HepG2 (cell line): ENCODE measurements at regions of chr2 and their contacts with region 1.

Region 1: DNA sequence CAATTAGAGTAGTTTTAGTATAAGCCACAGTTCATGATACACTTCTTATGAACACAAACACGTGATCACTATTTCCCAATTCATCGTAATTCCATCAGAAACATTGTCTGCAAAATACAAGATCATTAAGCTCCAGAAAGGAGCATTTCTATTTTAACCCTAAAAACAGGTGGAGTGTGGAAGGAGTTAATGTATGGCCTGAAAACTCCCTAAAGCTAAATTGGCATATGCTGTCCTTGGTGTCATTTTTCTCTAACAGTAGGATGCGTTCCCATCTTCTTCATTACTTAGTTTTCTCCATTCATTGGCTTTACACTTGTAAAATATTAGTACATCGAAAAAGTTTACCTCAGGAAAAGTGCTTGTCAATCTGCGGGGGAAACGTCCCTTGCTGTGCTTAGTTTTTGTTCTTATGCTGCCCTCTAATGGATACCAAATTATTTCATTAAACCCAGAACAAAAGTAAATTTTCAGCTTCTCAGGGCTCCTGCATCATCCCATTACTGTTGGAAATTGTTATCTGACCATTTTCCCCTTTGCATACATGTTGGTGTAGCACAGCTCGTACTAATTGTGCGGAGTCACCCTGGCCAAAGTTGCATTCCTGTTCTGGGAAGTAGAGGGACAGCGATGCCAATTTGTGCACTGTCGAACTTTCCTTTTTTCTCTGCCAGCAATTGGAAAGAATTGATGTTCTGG is 153.4 kb downstream of the GPD2 start:
- DNase-seq: peak; percentile 31
- ATAC-seq: peak; percentile 83
- H3K4me3 ChIP-seq: no peak overlapping the region
- H3K27ac ChIP-seq: no peak overlapping the region
- H3K4me1 ChIP-seq: 0 out of 2 replicates have a peak, but pooled peaks cover 8% of the 10 kb centered on the region
- H3K27me3 ChIP-seq: no peaks in the 10 kb centered on the region
- CTCF ChIP-seq: peak; percentile 71
- EP300 ChIP-seq: no peak
- POLR2A ChIP-seq: no peak
- RAD21 ChIP-seq: peak; percentile 65

Region 2: GRCh38 chr2:155368934-155369333 is 1220.6 kb before region 1 on chr2:
- CTCF ChIA-PET with region 1: interaction called, 7 read pairs
- POLR2A ChIA-PET with region 1: no interaction called
- in situ Hi-C with region 1: no loop called
- intact Hi-C with region 1: loop called (anchors 2 kb)
- DNase-seq: peak; percentile 12
- ATAC-seq: peak; percentile 44; the same call in 2 of the 3 replicates
- H3K4me3 ChIP-seq: no peak overlapping the region
- H3K27ac ChIP-seq: no peak overlapping the region
- H3K4me1 ChIP-seq: no peaks in the 10 kb centered on the region
- H3K27me3 ChIP-seq: no peaks in the 10 kb centered on the region
- CTCF ChIP-seq: peak; percentile 33; the same call in 1 of the 2 replicates
- EP300 ChIP-seq: no peak
- POLR2A ChIP-seq: no peak
- RAD21 ChIP-seq: no peak

Region 3: GRCh38 chr2:156065905-156066304 is 523.6 kb before region 1 on chr2:
- CTCF ChIA-PET with region 1: no interaction called
- POLR2A ChIA-PET with region 1: no interaction called
- in situ Hi-C with region 1: no loop called
- intact Hi-C with region 1: loop called (anchors 1 kb)
- DNase-seq: peak; percentile 18
- ATAC-seq: no peak
- H3K4me3 ChIP-seq: no peak overlapping the region
- H3K27ac ChIP-seq: no peak overlapping the region
- H3K4me1 ChIP-seq: no peaks in the 10 kb centered on the region
- H3K27me3 ChIP-seq: no peaks in the 10 kb centered on the region
- CTCF ChIP-seq: no peak
- EP300 ChIP-seq: no peak
- POLR2A ChIP-seq: no peak
- RAD21 ChIP-seq: no peak

Region 4: DNA sequence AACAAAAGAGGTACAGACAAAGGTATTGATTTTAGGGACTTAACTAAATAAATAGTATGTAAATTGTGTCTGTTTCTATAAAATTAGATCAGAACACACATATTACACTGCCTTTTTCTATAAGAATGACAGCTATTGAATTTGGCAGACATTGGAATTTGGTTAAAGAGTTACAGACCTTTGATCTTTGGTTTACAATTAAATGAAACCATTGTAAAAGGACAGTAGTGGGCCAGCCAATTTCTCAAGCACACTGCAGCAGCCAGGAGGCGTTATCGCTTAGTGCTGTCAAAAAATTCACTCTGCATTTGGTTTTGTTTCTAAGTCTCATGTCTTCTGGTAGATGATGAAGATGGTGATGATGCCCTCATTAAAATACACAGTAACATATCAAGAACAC is 432.9 kb before region 1 on chr2:
- CTCF ChIA-PET with region 1: no interaction called
- POLR2A ChIA-PET with region 1: no interaction called
- in situ Hi-C with region 1: no loop called
- intact Hi-C with region 1: loop called (anchors 5 kb)
- DNase-seq: peak; percentile 50
- ATAC-seq: peak; percentile 85
- H3K4me3 ChIP-seq: no peak overlapping the region
- H3K27ac ChIP-seq: no peak overlapping the region
- H3K4me1 ChIP-seq: 0 out of 2 replicates have a peak, but pooled peaks cover 7% of the 10 kb centered on the region
- H3K27me3 ChIP-seq: no peaks in the 10 kb centered on the region
- CTCF ChIP-seq: peak; percentile 55
- EP300 ChIP-seq: no peak
- POLR2A ChIP-seq: no peak
- RAD21 ChIP-seq: no peak

Region 5: GRCh38 chr2:157055660-157056199 is 466.2 kb after region 1 on chr2:
- CTCF ChIA-PET with region 1: no interaction called
- POLR2A ChIA-PET with region 1: no interaction called
- in situ Hi-C with region 1: no loop called
- intact Hi-C with region 1: no loop called
- DNase-seq: peak; percentile 27
- ATAC-seq: no peak
- H3K4me3 ChIP-seq: no peak overlapping the region
- H3K27ac ChIP-seq: no peak overlapping the region
- H3K4me1 ChIP-seq: peaks cover 13% of the 10 kb centered on the region
- H3K27me3 ChIP-seq: no peaks in the 10 kb centered on the region
- CTCF ChIP-seq: peak; percentile 18; the same call in 1 of the 2 replicates
- EP300 ChIP-seq: no peak
- POLR2A ChIP-seq: no peak
- RAD21 ChIP-seq: no peak

Region 6: GRCh38 chr2:157194097-157194688 is 604.7 kb after region 1 on chr2:
- CTCF ChIA-PET with region 1: no interaction called
- POLR2A ChIA-PET with region 1: no interaction called
- in situ Hi-C with region 1: no loop called
- intact Hi-C with region 1: loop called (anchors 5 kb)
- DNase-seq: peak; percentile 46
- ATAC-seq: peak; percentile 70
- H3K4me3 ChIP-seq: no peak overlapping the region
- H3K27ac ChIP-seq: no peak overlapping the region
- H3K4me1 ChIP-seq: no peaks in the 10 kb centered on the region
- H3K27me3 ChIP-seq: no peaks in the 10 kb centered on the region; a peak in 1 of 5 replicates
- CTCF ChIP-seq: peak; percentile 71
- EP300 ChIP-seq: no peak
- POLR2A ChIP-seq: no peak
- RAD21 ChIP-seq: 0 out of 2 replicates have a peak, but pooled peaks have one; percentile 34